Activated B cell treated with CpG ODN at 0.5 μM for 24 hours (primary cell): ENCODE measurements at regions of chr15 and their contacts with region 1.

Region 1: DNA sequence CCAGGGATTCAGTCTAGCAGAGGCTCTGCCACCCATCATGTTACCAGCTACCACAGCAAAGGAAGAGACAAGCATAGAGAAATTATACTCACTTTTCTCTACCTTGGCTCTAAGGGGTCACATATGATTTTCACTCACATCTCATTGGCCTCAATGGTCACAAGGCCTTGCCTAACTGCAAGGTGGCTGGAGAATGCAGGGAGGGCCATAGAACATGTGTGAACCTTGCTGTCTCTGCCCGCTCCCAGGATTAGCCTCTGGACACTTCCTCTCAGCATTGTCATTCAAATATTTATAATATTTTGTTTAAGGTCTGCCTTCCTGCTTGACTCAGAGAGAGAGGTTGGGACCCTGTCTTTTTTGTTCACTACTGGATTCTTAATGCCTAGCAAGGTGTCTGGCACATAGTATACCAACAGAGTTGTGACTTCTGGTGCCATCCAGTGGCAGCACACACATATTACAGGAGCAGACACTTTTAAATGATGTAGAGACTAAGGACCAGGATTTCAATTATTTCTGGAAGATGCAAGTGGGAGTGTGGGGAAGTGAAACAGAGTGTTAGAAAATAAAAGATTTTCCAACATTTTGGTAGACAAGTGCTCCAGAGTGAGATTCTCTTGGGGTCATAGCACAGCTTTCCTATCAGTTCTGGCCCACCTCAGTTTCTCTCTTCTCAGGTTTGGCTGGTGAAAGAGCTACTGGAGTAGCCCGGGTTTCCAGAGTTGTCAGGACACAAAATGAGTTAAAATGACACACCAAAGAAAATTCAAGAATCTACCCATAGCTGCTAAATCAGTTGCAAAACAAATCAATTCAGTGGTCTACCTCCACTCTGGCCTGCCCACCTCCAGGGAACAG is 119.0 kb upstream of the RASGRP1 start:
- DNase-seq: peak; percentile 47
- ATAC-seq: peak; percentile 74
- H3K4me3 Mint-ChIP-seq: peak overlapping the region; percentile 32
- H3K27ac Mint-ChIP-seq: peak overlapping the region; percentile 86
- H3K4me1 Mint-ChIP-seq: peaks cover 33% of the 10 kb centered on the region
- H3K27me3 Mint-ChIP-seq: no peaks in the 10 kb centered on the region
- CTCF ChIP-seq: peak; percentile 56

Region 2: GRCh38 chr15:38453971-38454695 is 229.5 kb before region 1 on chr15 and contains the start of gene FAM98B:
- CTCF ChIA-PET with region 1: interaction called, 9 read pairs
- POLR2A ChIA-PET with region 1: interaction called, 11 read pairs
- intact Hi-C with region 1: loop called (anchors 1 kb)
- DNase-seq: peak; percentile 92
- ATAC-seq: peak; percentile 90
- H3K4me3 Mint-ChIP-seq: peak within 1 kb of the TSS; percentile 97
- H3K27ac Mint-ChIP-seq: peak within 1 kb of the TSS; percentile 91
- H3K4me1 Mint-ChIP-seq: peaks cover 35% of the 10 kb centered on the region
- H3K27me3 Mint-ChIP-seq: peaks cover 2% of the 10 kb centered on the region
- CTCF ChIP-seq: no peak
- total RNA-seq, gene FAM98B: 29.9 and 30.7 TPM in 2 replicates

Region 3: DNA sequence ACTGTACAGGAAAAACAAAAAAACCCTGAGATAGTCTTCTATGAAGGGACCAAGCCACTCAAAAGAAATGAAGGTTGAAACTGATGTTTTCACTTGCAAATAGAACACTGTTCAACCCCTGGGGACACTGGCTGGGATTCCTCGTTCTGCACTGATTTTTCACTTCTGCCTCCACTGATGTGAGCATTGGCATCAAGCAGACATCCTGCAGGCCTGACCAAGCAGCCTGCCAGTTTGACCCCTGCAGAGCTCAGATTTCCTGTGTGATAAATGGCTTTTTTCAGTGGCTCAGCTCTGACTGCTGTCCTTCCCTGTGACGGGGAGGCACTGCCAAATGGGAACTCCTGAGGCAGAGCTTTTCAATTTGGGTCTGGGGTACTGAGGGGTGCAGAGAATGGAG is 169.0 kb before region 1 on chr15:
- CTCF ChIA-PET with region 1: no interaction called
- POLR2A ChIA-PET with region 1: no interaction called
- intact Hi-C with region 1: loop called (anchors 1 kb)
- DNase-seq: no peak
- ATAC-seq: peak; percentile 88
- H3K4me3 Mint-ChIP-seq: no peak overlapping the region
- H3K27ac Mint-ChIP-seq: peak overlapping the region; percentile 2
- H3K4me1 Mint-ChIP-seq: peaks cover 16% of the 10 kb centered on the region
- H3K27me3 Mint-ChIP-seq: no peaks in the 10 kb centered on the region
- CTCF ChIP-seq: no peak

Region 4: GRCh38 chr15:38647683-38648082 is 35.9 kb before region 1 on chr15:
- CTCF ChIA-PET with region 1: interaction called, 45 read pairs
- POLR2A ChIA-PET with region 1: interaction called, 13 read pairs
- intact Hi-C with region 1: loop called (anchors 1 kb)
- DNase-seq: no peak
- ATAC-seq: no peak
- H3K4me3 Mint-ChIP-seq: no peak overlapping the region
- H3K27ac Mint-ChIP-seq: no peak overlapping the region
- H3K4me1 Mint-ChIP-seq: peaks cover 60% of the 10 kb centered on the region
- H3K27me3 Mint-ChIP-seq: no peaks in the 10 kb centered on the region
- CTCF ChIP-seq: no peak

Region 5: GRCh38 chr15:38671675-38672254 is 11.8 kb before region 1 on chr15:
- CTCF ChIA-PET with region 1: interaction called, 54 read pairs
- POLR2A ChIA-PET with region 1: interaction called, 69 read pairs
- intact Hi-C with region 1: loop called (anchors 1 kb)
- DNase-seq: peak; percentile 22
- ATAC-seq: peak; percentile 66
- H3K4me3 Mint-ChIP-seq: peak overlapping the region; percentile 65
- H3K27ac Mint-ChIP-seq: peak overlapping the region; percentile 94
- H3K4me1 Mint-ChIP-seq: peaks cover 78% of the 10 kb centered on the region
- H3K27me3 Mint-ChIP-seq: no peaks in the 10 kb centered on the region
- CTCF ChIP-seq: no peak

Region 6: DNA sequence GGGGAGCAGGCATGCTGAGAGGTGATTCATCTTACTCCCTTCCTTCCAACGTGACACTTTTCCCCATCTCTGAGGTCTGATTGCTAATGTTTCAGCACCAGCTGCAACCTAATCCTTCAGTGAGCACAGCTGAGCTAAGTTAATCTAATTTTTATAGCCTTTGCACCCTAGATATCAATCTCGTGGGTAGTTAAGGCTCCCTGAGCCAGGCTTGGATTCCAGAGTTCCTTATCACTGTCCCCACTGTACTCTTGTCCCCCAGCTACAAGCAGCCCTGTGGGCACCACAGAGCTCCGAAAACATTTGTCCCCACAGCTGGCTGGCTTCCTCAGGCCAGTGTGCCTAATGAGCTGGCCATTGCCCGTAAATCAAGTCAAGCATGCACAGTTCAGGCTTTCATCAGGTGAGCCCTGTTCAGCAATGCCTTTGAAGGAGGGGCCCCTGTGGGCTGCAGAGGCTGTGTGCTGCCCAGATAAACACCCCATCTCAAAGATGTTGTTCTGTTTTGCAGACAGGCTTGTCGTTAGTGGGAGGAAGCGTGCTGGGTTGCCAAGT is 257.9 kb after region 1 on chr15:
- CTCF ChIA-PET with region 1: no interaction called
- POLR2A ChIA-PET with region 1: no interaction called
- intact Hi-C with region 1: no loop called
- DNase-seq: no peak
- ATAC-seq: no peak
- H3K4me3 Mint-ChIP-seq: no peak overlapping the region
- H3K27ac Mint-ChIP-seq: no peak overlapping the region
- H3K4me1 Mint-ChIP-seq: no peaks in the 10 kb centered on the region
- H3K27me3 Mint-ChIP-seq: no peaks in the 10 kb centered on the region
- CTCF ChIP-seq: no peak